ENCODE measurements at regions of chr6 and their contacts with region 1.

Region 1: DNA sequence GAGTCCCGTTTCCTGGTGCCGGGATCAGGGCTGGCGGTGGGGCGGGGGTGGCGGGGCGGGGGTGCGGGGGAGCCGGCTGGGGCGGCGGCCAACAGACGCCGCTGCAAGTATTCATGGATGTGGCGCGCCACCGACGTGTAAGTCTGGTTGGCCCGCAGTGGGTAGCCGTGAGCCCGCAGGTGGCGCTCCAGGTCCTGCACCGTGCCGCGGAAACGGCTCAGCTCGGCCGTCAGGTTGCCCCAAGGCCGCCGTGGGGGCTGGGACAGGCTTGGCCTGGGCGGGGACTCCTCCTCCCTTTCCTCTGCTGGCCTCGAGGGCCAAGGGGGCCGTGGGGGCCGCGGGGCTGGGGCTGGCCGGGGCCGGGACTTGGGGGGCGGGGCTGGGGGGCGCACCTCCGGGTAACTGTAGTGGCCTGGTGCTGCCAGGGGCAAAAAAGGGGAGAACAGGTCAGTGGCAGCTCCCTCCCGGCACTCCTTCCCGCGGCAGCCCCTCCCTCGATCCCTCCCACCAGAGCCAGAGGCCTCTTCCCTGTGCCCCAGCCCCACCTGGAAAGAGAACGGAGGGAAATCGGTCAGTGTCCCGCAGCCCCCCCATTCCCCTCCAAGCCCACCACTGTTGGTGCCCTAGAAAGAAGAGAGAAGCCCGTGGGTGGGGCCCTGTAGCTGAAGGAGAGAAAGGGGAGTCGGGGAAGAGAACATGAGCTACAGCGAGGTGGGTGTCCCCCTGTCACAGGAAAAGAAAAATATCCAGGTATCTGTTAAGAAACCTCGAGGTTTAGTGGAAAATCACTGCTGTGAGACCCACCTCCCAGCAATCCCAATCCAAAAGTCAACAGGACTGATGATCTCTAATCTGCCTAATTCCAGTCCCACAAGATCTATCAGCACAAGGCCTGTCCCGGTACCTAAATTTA is 21.3 kb downstream of the TNXB start:
- DNase-seq: peak in 1 of 2 donors; percentile 94
- H3K4me3 ChIP-seq: peak overlapping the region in 1 of 2 donors; percentile 59
- H3K27ac ChIP-seq: peak overlapping the region; percentile 82 to 92
- H3K4me1 ChIP-seq: peaks cover 9 to 26% of the 10 kb centered on the region in 2 donors
- H3K27me3 ChIP-seq: no peaks in the 10 kb centered on the region
- CTCF ChIP-seq: peak; percentile 65 to 83 (median 76)

Region 2: GRCh38 chr6:31158140-31158862 is 929.5 kb before region 1 on chr6 and contains the start of gene TCF19:
- intact Hi-C with region 1: no loop called
- DNase-seq: peak; percentile 96 to 100
- H3K4me3 ChIP-seq: peak within 1 kb of the TSS; percentile 70 to 86
- H3K27ac ChIP-seq: peak within 1 kb of the TSS; percentile 53 to 70
- H3K4me1 ChIP-seq: peaks cover 0 to 17% of the 10 kb centered on the region in 2 donors
- H3K27me3 ChIP-seq: no peaks in the 10 kb centered on the region
- CTCF ChIP-seq: no peak
- total RNA-seq, gene TCF19: 10.3 TPM

Region 3: DNA sequence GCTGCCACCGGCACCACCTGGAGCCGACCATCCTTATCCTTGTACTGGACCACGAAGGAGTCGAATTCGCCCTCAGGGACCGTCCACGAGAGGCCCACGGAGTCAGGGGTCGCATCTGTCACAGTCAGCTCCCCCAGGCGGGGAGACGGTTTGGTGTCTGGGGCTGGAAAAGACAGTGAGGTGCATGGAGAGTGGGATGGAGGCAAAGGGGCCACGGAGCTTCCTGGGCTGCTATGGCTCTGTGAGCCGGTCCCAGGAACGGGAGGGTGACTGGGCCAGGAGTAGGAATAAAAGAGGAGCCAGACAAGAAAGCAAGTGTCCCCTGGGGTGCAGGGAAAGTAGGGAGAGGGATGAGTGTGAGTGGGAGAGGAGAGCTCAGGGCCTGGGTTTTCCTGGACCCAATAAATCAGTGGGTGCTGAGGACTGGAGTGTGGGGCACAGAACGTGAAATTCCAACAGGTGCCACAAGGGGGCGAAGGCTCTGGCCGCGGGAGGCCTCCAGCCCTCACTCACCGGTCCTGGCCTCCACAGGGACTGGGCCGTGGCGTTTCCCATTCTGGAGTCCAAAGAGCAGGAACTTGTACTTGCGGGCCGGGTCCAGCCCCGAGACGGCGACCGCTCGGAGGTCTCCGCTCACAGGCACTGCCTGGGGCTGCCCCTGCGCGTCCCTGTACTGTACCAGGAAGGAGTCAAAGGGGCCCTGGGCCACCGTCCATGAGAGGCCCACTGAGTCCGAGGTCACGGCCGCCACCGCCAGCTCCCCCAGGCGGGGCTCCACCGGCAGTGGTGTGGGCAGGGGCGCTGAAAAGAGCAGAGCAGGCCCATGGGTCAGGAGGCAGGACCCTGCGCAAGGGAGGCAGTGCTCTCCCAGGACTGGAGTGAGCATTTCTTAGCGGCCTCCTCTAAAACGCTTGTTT is 39.7 kb before region 1 on chr6:
- intact Hi-C with region 1: loop called (anchors 2 kb)
- DNase-seq: peak in 1 of 2 donors; percentile 87
- H3K4me3 ChIP-seq: no peak overlapping the region
- H3K27ac ChIP-seq: peak overlapping the region; percentile 69 to 77
- H3K4me1 ChIP-seq: peaks cover 0 to 19% of the 10 kb centered on the region in 2 donors
- H3K27me3 ChIP-seq: no peaks in the 10 kb centered on the region
- CTCF ChIP-seq: peak; percentile 81 to 91 (median 83)

Region 4: GRCh38 chr6:32108094-32108627 is 20.3 kb after region 1 on chr6:
- intact Hi-C with region 1: loop called (anchors 1 kb)
- DNase-seq: peak in 1 of 2 donors; percentile 85
- H3K4me3 ChIP-seq: peak overlapping the region; percentile 34 to 58
- H3K27ac ChIP-seq: peak overlapping the region; percentile 68 to 81
- H3K4me1 ChIP-seq: peaks cover 14 to 51% of the 10 kb centered on the region in 2 donors
- H3K27me3 ChIP-seq: no peaks in the 10 kb centered on the region
- CTCF ChIP-seq: no peak

Region 5: GRCh38 chr6:32113386-32114352 is 25.8 kb after region 1 on chr6:
- intact Hi-C with region 1: loop called (anchors 1 kb)
- DNase-seq: peak; percentile 78 to 96
- H3K4me3 ChIP-seq: no peak overlapping the region
- H3K27ac ChIP-seq: peak overlapping the region; percentile 68 to 81
- H3K4me1 ChIP-seq: peaks cover 3 to 34% of the 10 kb centered on the region in 2 donors
- H3K27me3 ChIP-seq: no peaks in the 10 kb centered on the region
- CTCF ChIP-seq: peak; percentile 50 to 69 (median 60)

Region 6: DNA sequence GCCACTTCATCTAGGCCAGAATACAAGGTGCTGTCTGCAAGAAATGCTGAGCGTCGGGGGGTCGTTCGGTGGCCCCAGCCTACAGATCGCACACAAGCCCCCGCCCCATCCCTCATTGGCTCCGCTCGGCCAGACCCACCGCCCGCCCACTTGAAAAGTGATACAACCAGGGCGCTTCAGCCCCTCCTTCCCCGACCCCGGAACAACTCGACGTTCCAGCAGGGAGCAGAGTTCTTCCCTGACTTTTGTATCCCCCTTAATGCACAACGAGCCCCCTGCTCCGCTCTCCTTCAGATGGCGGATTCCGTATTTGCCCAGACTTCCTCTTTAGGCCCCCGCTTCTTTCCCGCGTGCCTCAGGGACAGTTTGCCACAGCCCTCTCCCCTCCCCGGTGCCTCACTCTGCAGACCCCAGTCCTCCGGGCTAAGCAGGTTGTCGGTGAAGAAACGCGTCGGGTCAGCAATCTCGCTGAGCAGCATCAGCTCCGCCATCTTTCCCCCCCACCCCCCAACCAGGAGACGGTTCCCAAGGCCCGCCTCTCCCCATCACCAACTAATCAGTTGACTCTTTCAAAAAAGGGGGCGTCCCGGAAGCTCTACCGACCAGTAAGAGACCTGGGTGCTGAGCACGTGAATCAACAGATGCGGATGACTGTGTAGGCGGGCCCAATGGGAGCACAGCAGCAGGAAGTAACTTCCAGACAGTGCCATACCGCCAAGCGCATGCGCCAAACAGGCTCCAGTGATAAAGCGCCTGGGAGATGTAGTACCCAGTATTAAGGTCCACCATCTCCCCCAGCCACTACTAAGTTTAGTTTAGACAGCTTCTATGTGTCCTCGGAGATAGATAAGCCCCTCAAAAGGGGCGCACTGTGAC is 40.1 kb after region 1 on chr6 and contains the start of gene ATF6B:
- intact Hi-C with region 1: loop called (anchors 1 kb)
- DNase-seq: peak; percentile 99 to 100
- H3K4me3 ChIP-seq: peak within 1 kb of the TSS; percentile 87 to 93
- H3K27ac ChIP-seq: peak within 1 kb of the TSS; percentile 89 to 92
- H3K4me1 ChIP-seq: peaks cover 19 to 25% of the 10 kb centered on the region in 2 donors
- H3K27me3 ChIP-seq: no peaks in the 10 kb centered on the region
- CTCF ChIP-seq: no peak
- total RNA-seq, gene ATF6B: 123 TPM

Measured in ascending aorta (tissue), 2 donors.